GM12878 (cell line): ENCODE measurements at regions of chr3 and their contacts with region 1.

Region 1: GRCh38 chr3:45964139-45964538 is 20.9 kb downstream of the CXCR6 start:
- DNase-seq: peak; percentile 31
- ATAC-seq: peak; percentile 75
- H3K4me3 ChIP-seq: no peak overlapping the region
- H3K27ac ChIP-seq: no peak overlapping the region
- H3K4me1 ChIP-seq: peaks cover 48% of the 10 kb centered on the region
- H3K27me3 ChIP-seq: no peaks in the 10 kb centered on the region
- CTCF ChIP-seq: no peak
- EP300 ChIP-seq: peak in 1 of 2 experiments; percentile 26; a peak in 1 of 4 replicates
- POLR2A ChIP-seq: no peak
- RAD21 ChIP-seq: no peak

Region 2: GRCh38 chr3:45748068-45748467 is 216.1 kb before region 1 on chr3:
- CTCF ChIA-PET with region 1: no interaction called
- POLR2A ChIA-PET with region 1: no interaction called
- RAD21 ChIA-PET with region 1: no interaction called
- SMC1A ChIA-PET with region 1: no interaction called
- in situ Hi-C with region 1: no loop called
- intact Hi-C with region 1: no loop called
- DNase-seq: no peak
- ATAC-seq: no peak
- H3K4me3 ChIP-seq: no peak overlapping the region
- H3K27ac ChIP-seq: no peak overlapping the region
- H3K4me1 ChIP-seq: no peaks in the 10 kb centered on the region
- H3K27me3 ChIP-seq: no peaks in the 10 kb centered on the region
- CTCF ChIP-seq: no peak
- EP300 ChIP-seq: no peak
- POLR2A ChIP-seq: no peak
- RAD21 ChIP-seq: no peak

Region 3: GRCh38 chr3:45948311-45948781 is 15.8 kb before region 1 on chr3:
- CTCF ChIA-PET with region 1: interaction called, 19 read pairs
- POLR2A ChIA-PET with region 1: interaction called, 7 read pairs
- RAD21 ChIA-PET with region 1: interaction called, 6 read pairs
- SMC1A ChIA-PET with region 1: interaction called, 11 read pairs
- in situ Hi-C with region 1: no loop called
- intact Hi-C with region 1: no loop called
- DNase-seq: no peak
- ATAC-seq: no peak
- H3K4me3 ChIP-seq: no peak overlapping the region
- H3K27ac ChIP-seq: no peak overlapping the region
- H3K4me1 ChIP-seq: no peaks in the 10 kb centered on the region
- H3K27me3 ChIP-seq: no peaks in the 10 kb centered on the region
- CTCF ChIP-seq: no peak
- EP300 ChIP-seq: no peak
- POLR2A ChIP-seq: no peak
- RAD21 ChIP-seq: no peak